A549 (cell line): ENCODE measurements at regions of chr17 and their contacts with region 1.

Region 1: GRCh38 chr17:18960803-18961511 is 9.0 kb downstream of the SLC5A10 start:
- DNase-seq: peak; percentile 77 to 90
- ATAC-seq: peak; percentile 72 to 92
- H3K4me3 ChIP-seq: no peak overlapping the region
- H3K27ac ChIP-seq: peak overlapping the region; percentile 65 to 86
- H3K4me1 ChIP-seq: peaks cover 34% of the 10 kb centered on the region
- CTCF ChIP-seq: peak; percentile 98
- EP300 ChIP-seq: no peak
- POLR2A ChIP-seq: no peak
- RAD21 ChIP-seq: peak; percentile 99

Region 2: DNA sequence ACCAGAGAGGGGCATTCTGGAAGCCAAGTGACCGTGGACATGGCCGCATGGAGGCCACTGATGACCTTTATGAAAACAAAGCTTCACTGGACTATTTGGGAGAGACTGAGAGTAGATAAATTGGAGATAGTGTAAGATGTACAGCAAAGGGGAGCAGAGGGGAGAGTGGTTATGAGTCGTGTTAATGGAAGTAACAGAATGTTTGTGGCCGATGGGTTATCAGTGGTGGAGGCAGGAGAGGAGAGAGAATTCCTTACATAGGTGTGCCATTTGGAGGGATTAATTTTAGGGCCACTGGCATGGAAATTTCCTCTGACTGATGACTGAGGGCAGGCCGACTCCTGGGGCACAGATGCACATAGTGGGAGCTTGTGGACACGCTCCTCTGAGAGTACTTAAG is 83.9 kb before region 1 on chr17:
- CTCF ChIA-PET with region 1: interaction called, 19 read pairs
- POLR2A ChIA-PET with region 1: no interaction called
- DNase-seq: peak in 1 of 2 experiments; percentile 21
- ATAC-seq: peak; percentile 64 to 83; a peak in 4 of 6 replicates
- H3K4me3 ChIP-seq: no peak overlapping the region
- H3K27ac ChIP-seq: peak overlapping the region in 1 of 2 experiments; percentile 65; a peak in 4 of 6 replicates
- H3K4me1 ChIP-seq: peaks cover 11% of the 10 kb centered on the region; the same call in 2 of the 3 replicates
- CTCF ChIP-seq: no peak
- EP300 ChIP-seq: no peak
- POLR2A ChIP-seq: no peak
- RAD21 ChIP-seq: no peak

Region 3: GRCh38 chr17:18921912-18922451 is 39.0 kb before region 1 on chr17:
- CTCF ChIA-PET with region 1: interaction called, 12 read pairs
- POLR2A ChIA-PET with region 1: no interaction called
- DNase-seq: peak; percentile 87 to 96
- ATAC-seq: peak; percentile 83 to 88
- H3K4me3 ChIP-seq: peak overlapping the region; percentile 25; the same call in 2 of the 3 replicates
- H3K27ac ChIP-seq: peak overlapping the region; percentile 89 to 92
- H3K4me1 ChIP-seq: peaks cover 43% of the 10 kb centered on the region
- CTCF ChIP-seq: no peak
- EP300 ChIP-seq: no peak
- POLR2A ChIP-seq: no peak
- RAD21 ChIP-seq: no peak

Region 4: GRCh38 chr17:18944646-18945045 is 16.3 kb before region 1 on chr17:
- CTCF ChIA-PET with region 1: interaction called, 48 read pairs
- POLR2A ChIA-PET with region 1: no interaction called
- DNase-seq: no peak
- ATAC-seq: no peak
- H3K4me3 ChIP-seq: no peak overlapping the region
- H3K27ac ChIP-seq: no peak overlapping the region
- H3K4me1 ChIP-seq: 0 out of 3 replicates have a peak, but pooled peaks cover 2% of the 10 kb centered on the region
- CTCF ChIP-seq: no peak
- EP300 ChIP-seq: no peak
- POLR2A ChIP-seq: no peak
- RAD21 ChIP-seq: no peak

Region 5: DNA sequence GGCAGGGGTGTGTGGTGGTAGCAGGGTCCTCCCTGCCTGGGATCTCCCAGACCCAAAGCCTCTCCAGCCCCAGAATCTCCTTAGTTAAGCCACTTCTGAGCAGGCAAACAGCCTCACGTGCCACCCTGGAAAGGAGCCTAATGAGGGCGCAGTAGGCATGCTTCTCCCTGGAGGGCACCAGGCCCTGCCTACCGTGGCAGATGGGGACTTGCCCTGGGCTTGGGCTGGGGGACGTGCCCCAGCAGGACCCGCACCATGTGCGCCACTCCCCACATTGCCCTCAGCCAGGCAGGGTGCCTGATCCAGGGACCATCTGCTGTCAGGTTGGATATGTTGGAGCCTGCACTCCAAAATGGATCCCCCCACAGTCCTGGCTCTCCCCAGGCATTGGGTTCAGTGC is 29.4 kb after region 1 on chr17:
- CTCF ChIA-PET with region 1: interaction called, 215 read pairs
- POLR2A ChIA-PET with region 1: no interaction called
- DNase-seq: no peak
- ATAC-seq: no peak
- H3K4me3 ChIP-seq: no peak overlapping the region
- H3K27ac ChIP-seq: 0 out of 6 replicates have a peak overlapping the region, but pooled peaks of 1 of the 2 experiments have one; percentile 13
- H3K4me1 ChIP-seq: peaks cover 22% of the 10 kb centered on the region
- CTCF ChIP-seq: no peak
- EP300 ChIP-seq: no peak
- POLR2A ChIP-seq: no peak
- RAD21 ChIP-seq: no peak

Region 6: GRCh38 chr17:19004421-19005136 is 43.6 kb after region 1 on chr17 and contains the start of gene FAM83G:
- CTCF ChIA-PET with region 1: interaction called, 110 read pairs
- POLR2A ChIA-PET with region 1: interaction called, 4 read pairs
- DNase-seq: peak; percentile 87 to 90
- ATAC-seq: peak; percentile 79 to 80
- H3K4me3 ChIP-seq: peak within 1 kb of the TSS; percentile 69
- H3K27ac ChIP-seq: peak within 1 kb of the TSS; percentile 90 to 98
- H3K4me1 ChIP-seq: peaks cover 38% of the 10 kb centered on the region
- CTCF ChIP-seq: no peak
- EP300 ChIP-seq: peak in 1 of 2 experiments; percentile 13; a peak in 1 of 5 replicates
- POLR2A ChIP-seq: peak; percentile 67
- RAD21 ChIP-seq: no peak
- polyA plus RNA-seq, gene FAM83G: 11.0 and 12.8 TPM in 2 replicates

Region 7: GRCh38 chr17:19024101-19025078 is 63.4 kb after region 1 on chr17:
- CTCF ChIA-PET with region 1: interaction called, 110 read pairs
- POLR2A ChIA-PET with region 1: no interaction called
- DNase-seq: peak in 1 of 2 experiments; percentile 49
- ATAC-seq: peak in 1 of 2 experiments; percentile 15; a peak in 2 of 6 replicates
- H3K4me3 ChIP-seq: no peak overlapping the region
- H3K27ac ChIP-seq: peak overlapping the region; percentile 8 to 19; a peak in 1 of 6 replicates
- H3K4me1 ChIP-seq: no peaks in the 10 kb centered on the region
- CTCF ChIP-seq: no peak
- EP300 ChIP-seq: no peak
- POLR2A ChIP-seq: no peak
- RAD21 ChIP-seq: no peak